Transverse colon (tissue), 4 donors: ENCODE measurements at regions of chr1 and their contacts with region 1.

Region 1: GRCh38 chr1:82001345-82001744 is 200.6 kb downstream of the ADGRL2 start:
- DNase-seq: no peak
- H3K4me3 ChIP-seq: no peak overlapping the region
- H3K27ac ChIP-seq: no peak overlapping the region
- H3K4me1 ChIP-seq: no peaks in the 10 kb centered on the region
- H3K27me3 ChIP-seq: no peaks in the 10 kb centered on the region
- CTCF ChIP-seq: no peak
- EP300 ChIP-seq: no peak
- POLR2A ChIP-seq: no peak

Region 2: GRCh38 chr1:82225421-82226185 is 224.3 kb after region 1 on chr1:
- in situ Hi-C with region 1: no loop called
- intact Hi-C with region 1: loop called (anchors 10 kb)
- DNase-seq: no peak
- H3K4me3 ChIP-seq: no peak overlapping the region
- H3K27ac ChIP-seq: no peak overlapping the region
- H3K4me1 ChIP-seq: peaks cover 0 to 19% (median 4%) of the 10 kb centered on the region in 4 donors
- H3K27me3 ChIP-seq: no peaks in the 10 kb centered on the region
- CTCF ChIP-seq: no peak
- EP300 ChIP-seq: no peak
- POLR2A ChIP-seq: no peak